ENCODE measurements at regions of chr1 and their contacts with region 1.

Region 1: DNA sequence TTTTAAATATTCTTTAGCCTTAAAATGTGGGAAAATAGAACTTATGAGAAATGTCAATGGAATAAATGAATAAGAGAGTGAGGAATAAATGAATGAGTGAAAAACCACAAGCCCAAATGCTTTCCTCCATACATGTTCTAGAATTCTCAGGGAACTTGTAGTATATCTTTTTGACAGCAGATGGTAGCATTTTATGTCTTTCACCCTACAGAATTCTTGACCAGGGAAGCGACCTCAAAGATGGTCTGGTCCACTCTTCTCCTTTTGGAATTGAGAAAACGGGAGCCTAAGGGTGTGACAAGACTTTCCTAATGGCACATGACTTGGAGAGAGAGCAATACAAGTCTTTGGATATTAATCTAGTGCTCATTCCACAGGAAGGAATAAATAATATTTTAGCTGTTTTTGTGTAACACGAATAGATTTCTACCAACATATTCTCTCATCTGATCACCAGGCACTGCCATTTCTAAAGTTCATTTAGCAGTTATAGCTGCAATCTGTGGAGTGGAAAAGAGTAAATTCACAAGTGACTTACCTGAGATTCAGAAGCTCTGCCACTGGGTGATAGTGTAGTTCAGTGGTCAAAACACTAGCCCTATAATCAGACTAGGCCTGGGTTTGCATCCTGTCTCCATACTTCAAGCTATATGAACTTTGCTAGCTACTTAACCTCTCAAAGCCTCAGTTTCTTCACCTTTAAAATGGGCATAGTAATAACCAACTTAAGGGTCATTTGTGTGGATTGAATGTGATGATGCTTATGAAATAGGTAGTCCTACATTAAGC is 15.0 kb upstream of the F5 start:
- DNase-seq: peak; percentile 20
- CTCF ChIP-seq: peak; percentile 27

Region 2: GRCh38 chr1:169707912-169708604 is 106.8 kb after region 1 on chr1:
- in situ Hi-C with region 1: loop called (anchors 5 kb)
- DNase-seq: no peak
- CTCF ChIP-seq: no peak

Region 3: GRCh38 chr1:169794530-169795416 is 193.5 kb after region 1 on chr1 and contains the start of gene METTL18:
- in situ Hi-C with region 1: loop called (anchors 10 kb)
- DNase-seq: peak; percentile 88
- CTCF ChIP-seq: no peak

Measured in GM13976 (cell line).